Dorsolateral prefrontal cortex (tissue), 120 donors: ENCODE measurements at regions of chr10 and their contacts with region 1.

Region 1: DNA sequence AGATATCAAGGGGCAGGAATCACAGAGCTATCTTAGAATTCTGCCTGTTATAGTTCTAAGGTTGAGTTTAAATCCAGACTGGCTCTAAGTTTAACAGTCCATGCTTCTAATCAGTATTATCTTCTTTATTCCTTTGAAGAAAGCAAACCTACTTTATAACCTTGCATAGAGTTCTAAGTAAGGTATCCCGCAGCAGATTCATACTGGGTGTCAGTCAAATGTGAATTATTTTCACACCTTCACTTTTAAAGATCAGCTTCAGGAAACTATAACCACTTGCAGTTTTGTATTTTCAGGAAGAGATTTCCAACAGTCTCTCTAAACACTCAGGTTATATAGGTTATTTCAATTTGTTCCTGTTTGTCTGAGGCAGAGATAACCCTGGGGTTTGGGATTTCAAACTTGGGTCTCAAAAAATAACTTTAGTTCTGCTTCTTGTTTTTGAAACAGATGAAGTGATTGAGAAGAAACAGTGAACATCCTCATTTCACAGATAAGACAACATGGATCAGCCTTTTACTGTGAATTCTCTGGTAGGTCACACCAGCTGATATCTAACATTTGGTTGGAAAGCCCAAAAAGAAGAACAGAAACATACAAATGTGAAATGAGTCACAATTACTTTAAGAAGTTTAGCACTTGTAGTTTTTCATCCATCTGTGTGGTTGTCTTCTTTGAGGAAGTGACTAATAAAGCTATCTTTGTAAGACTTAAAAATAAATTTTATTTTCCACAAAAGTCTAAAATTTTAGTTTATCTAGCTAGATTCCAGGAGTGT is 21.4 kb downstream of the STAMBPL1 start:
- DNase-seq: no peak
- H3K4me3 ChIP-seq: no peak overlapping the region
- H3K27ac ChIP-seq: peak overlapping the region in 58 of 59 donors; percentile 0 to 89 (median 78)
- H3K27me3 ChIP-seq: no peaks in the 10 kb centered on the region
- CTCF ChIP-seq: no peak

Region 2: GRCh38 chr10:88880282-88881076 is 20.9 kb before region 1 on chr10:
- intact Hi-C with region 1: loop called in 1 of 2 experiments (anchors 1 kb)
- DNase-seq: peak; percentile 41 to 82 (median 70)
- H3K4me3 ChIP-seq: peak overlapping the region; percentile 42 to 93 (median 77)
- H3K27ac ChIP-seq: peak overlapping the region; percentile 37 to 99 (median 93)
- H3K27me3 ChIP-seq: no peaks in the 10 kb centered on the region
- CTCF ChIP-seq: peak in 37 of 56 donors; percentile 4 to 45 (median 28)